WTC11 (cell line): ENCODE measurements at regions of chr4 and their contacts with region 1.

Region 1: GRCh38 chr4:22237155-22237751 is 278.6 kb downstream of the ADGRA3 start:
- DNase-seq: peak; percentile 91
- ATAC-seq: peak; percentile 88
- H3K4me3 Mint-ChIP-seq: no peak overlapping the region
- H3K27ac Mint-ChIP-seq: no peak overlapping the region
- H3K4me1 Mint-ChIP-seq: peaks cover 37% of the 10 kb centered on the region
- H3K27me3 Mint-ChIP-seq: no peaks in the 10 kb centered on the region
- CTCF ChIP-seq: peak; percentile 94

Region 2: GRCh38 chr4:22129454-22130029 is 107.7 kb before region 1 on chr4:
- CTCF ChIA-PET with region 1: interaction called, 13 read pairs
- POLR2A ChIA-PET with region 1: no interaction called
- DNase-seq: peak; percentile 66
- ATAC-seq: peak; percentile 99
- H3K4me3 Mint-ChIP-seq: no peak overlapping the region
- H3K27ac Mint-ChIP-seq: no peak overlapping the region
- H3K4me1 Mint-ChIP-seq: peaks cover 9% of the 10 kb centered on the region
- H3K27me3 Mint-ChIP-seq: 0 out of 2 replicates have a peak, but pooled peaks cover 5% of the 10 kb centered on the region
- CTCF ChIP-seq: peak; percentile 63

Region 3: GRCh38 chr4:22356987-22357596 is 119.8 kb after region 1 on chr4:
- CTCF ChIA-PET with region 1: interaction called, 21 read pairs
- POLR2A ChIA-PET with region 1: no interaction called
- DNase-seq: no peak
- ATAC-seq: peak; percentile 86
- H3K4me3 Mint-ChIP-seq: no peak overlapping the region
- H3K27ac Mint-ChIP-seq: no peak overlapping the region
- H3K4me1 Mint-ChIP-seq: peaks cover 14% of the 10 kb centered on the region
- H3K27me3 Mint-ChIP-seq: no peaks in the 10 kb centered on the region; the same call in 1 of the 2 replicates
- CTCF ChIP-seq: no peak

Region 4: GRCh38 chr4:22389240-22389870 is 152.1 kb after region 1 on chr4:
- CTCF ChIA-PET with region 1: interaction called, 53 read pairs
- POLR2A ChIA-PET with region 1: no interaction called
- DNase-seq: peak; percentile 57
- ATAC-seq: peak; percentile 74
- H3K4me3 Mint-ChIP-seq: no peak overlapping the region
- H3K27ac Mint-ChIP-seq: peak overlapping the region; percentile 78; the same call in 1 of the 2 replicates
- H3K4me1 Mint-ChIP-seq: peaks cover 5% of the 10 kb centered on the region; the same call in 1 of the 2 replicates
- H3K27me3 Mint-ChIP-seq: no peaks in the 10 kb centered on the region
- CTCF ChIP-seq: peak; percentile 61